ENCODE measurements at regions of chr2 and their contacts with region 1.

Region 1: GRCh38 chr2:232744963-232745362 is 31.4 kb downstream of the KCNJ13 start:
- DNase-seq: no peak
- ATAC-seq: no peak
- H3K4me3 ChIP-seq: no peak overlapping the region
- H3K4me3 Mint-ChIP-seq: peak overlapping the region in 1 of 10 donors; percentile 12
- H3K27ac ChIP-seq: no peak overlapping the region
- H3K27ac Mint-ChIP-seq: no peak overlapping the region
- H3K4me1 ChIP-seq: no peaks in the 10 kb centered on the region
- H3K4me1 Mint-ChIP-seq: peaks cover 9 to 37% (median 18%) of the 10 kb centered on the region in 7 donors
- H3K27me3 ChIP-seq: no peaks in the 10 kb centered on the region
- H3K27me3 Mint-ChIP-seq: no peaks in the 10 kb centered on the region

Region 2: GRCh38 chr2:232537079-232537478 is 207.9 kb before region 1 on chr2:
- CTCF ChIA-PET with region 1: no interaction called
- POLR2A ChIA-PET with region 1: no interaction called
- intact Hi-C with region 1: no loop called
- DNase-seq: no peak
- ATAC-seq: no peak
- H3K4me3 ChIP-seq: no peak overlapping the region
- H3K4me3 Mint-ChIP-seq: no peak overlapping the region
- H3K27ac ChIP-seq: no peak overlapping the region
- H3K27ac Mint-ChIP-seq: no peak overlapping the region
- H3K4me1 ChIP-seq: no peaks in the 10 kb centered on the region
- H3K4me1 Mint-ChIP-seq: peaks cover 0 to 11% (median under 1%) of the 10 kb centered on the region in 7 donors
- H3K27me3 ChIP-seq: no peaks in the 10 kb centered on the region
- H3K27me3 Mint-ChIP-seq: peaks cover 9 to 14% (median 12%) of the 10 kb centered on the region in 5 donors

Region 3: GRCh38 chr2:232728785-232729184 is 16.2 kb before region 1 on chr2:
- CTCF ChIA-PET with region 1: no interaction called
- POLR2A ChIA-PET with region 1: no interaction called
- intact Hi-C with region 1: loop called in 1 of 2 experiments (anchors 2 kb)
- DNase-seq: no peak
- ATAC-seq: no peak
- H3K4me3 ChIP-seq: no peak overlapping the region
- H3K4me3 Mint-ChIP-seq: no peak overlapping the region
- H3K27ac ChIP-seq: no peak overlapping the region
- H3K27ac Mint-ChIP-seq: no peak overlapping the region
- H3K4me1 ChIP-seq: no peaks in the 10 kb centered on the region
- H3K4me1 Mint-ChIP-seq: peaks cover 10 to 36% (median 28%) of the 10 kb centered on the region in 7 donors
- H3K27me3 ChIP-seq: no peaks in the 10 kb centered on the region
- H3K27me3 Mint-ChIP-seq: no peaks in the 10 kb centered on the region

Measured in naive thymus-derived CD4-positive, alpha-beta T cell (primary cell).